CD8-positive, alpha-beta T cell (primary cell): ENCODE measurements at regions of chr1 and their contacts with region 1.

Region 1: GRCh38 chr1:168342572-168343280 is 62.0 kb downstream of the TBX19 start:
- DNase-seq: peak; percentile 79 to 95 (median 88)
- ATAC-seq: peak; percentile 99
- H3K4me3 ChIP-seq: no peak overlapping the region
- H3K4me3 Mint-ChIP-seq: peak overlapping the region; percentile 54
- H3K27ac ChIP-seq: peak overlapping the region in 1 of 2 experiments; percentile 48
- H3K27ac Mint-ChIP-seq: peak overlapping the region; percentile 92
- H3K4me1 ChIP-seq: peaks cover 19% of the 10 kb centered on the region
- H3K4me1 Mint-ChIP-seq: peaks cover 32% of the 10 kb centered on the region
- H3K27me3 ChIP-seq: no peaks in the 10 kb centered on the region
- H3K27me3 Mint-ChIP-seq: no peaks in the 10 kb centered on the region
- CTCF ChIP-seq: peak; percentile 71

Region 2: DNA sequence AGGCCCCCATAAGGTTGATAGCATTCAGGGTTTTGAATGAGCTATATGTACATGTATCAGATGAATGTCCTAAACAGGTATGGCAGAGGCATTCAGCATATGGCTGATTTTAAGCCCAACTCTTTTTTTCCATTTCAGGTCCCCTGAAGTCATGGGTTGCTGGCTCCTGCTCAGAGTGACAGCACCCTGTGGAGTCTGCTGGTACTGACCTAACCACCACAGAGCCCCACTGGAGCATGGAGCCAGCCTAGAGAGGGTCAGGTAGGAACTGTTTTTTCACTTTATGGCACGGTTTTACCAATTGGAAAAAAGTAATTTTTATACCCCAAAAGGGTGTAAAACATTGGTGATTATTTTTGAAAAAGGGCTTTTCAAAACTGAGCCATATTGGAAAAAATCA is 323.3 kb before region 1 on chr1:
- CTCF ChIA-PET with region 1: no interaction called
- POLR2A ChIA-PET with region 1: no interaction called
- intact Hi-C with region 1: no loop called
- DNase-seq: no peak
- ATAC-seq: no peak
- H3K4me3 ChIP-seq: no peak overlapping the region
- H3K4me3 Mint-ChIP-seq: no peak overlapping the region
- H3K27ac ChIP-seq: no peak overlapping the region
- H3K27ac Mint-ChIP-seq: no peak overlapping the region
- H3K4me1 ChIP-seq: no peaks in the 10 kb centered on the region
- H3K4me1 Mint-ChIP-seq: no peaks in the 10 kb centered on the region
- H3K27me3 ChIP-seq: no peaks in the 10 kb centered on the region
- H3K27me3 Mint-ChIP-seq: no peaks in the 10 kb centered on the region
- CTCF ChIP-seq: no peak

Region 3: DNA sequence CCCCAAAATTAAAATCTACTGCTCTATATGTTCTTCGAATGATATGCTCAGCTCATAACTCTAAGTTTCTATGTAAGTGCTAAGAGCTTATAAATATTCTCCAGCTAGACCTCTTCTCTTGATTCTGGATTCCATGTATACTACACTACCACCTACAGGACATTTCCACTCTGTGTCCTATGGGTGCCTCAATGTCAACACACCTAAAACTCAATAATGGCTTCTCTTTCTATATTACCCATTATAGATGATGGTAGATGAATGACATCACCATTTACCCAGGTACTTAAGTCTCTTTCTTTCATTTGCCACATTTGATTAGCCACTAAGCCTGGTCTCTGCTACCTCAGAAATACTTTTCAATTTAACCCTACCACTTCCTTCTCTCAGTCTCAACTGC is 20.8 kb before region 1 on chr1:
- CTCF ChIA-PET with region 1: interaction called, 10 read pairs
- POLR2A ChIA-PET with region 1: no interaction called
- intact Hi-C with region 1: no loop called
- DNase-seq: no peak
- ATAC-seq: no peak
- H3K4me3 ChIP-seq: no peak overlapping the region
- H3K4me3 Mint-ChIP-seq: no peak overlapping the region
- H3K27ac ChIP-seq: no peak overlapping the region
- H3K27ac Mint-ChIP-seq: no peak overlapping the region
- H3K4me1 ChIP-seq: no peaks in the 10 kb centered on the region
- H3K4me1 Mint-ChIP-seq: no peaks in the 10 kb centered on the region
- H3K27me3 ChIP-seq: no peaks in the 10 kb centered on the region
- H3K27me3 Mint-ChIP-seq: no peaks in the 10 kb centered on the region
- CTCF ChIP-seq: no peak

Region 4: GRCh38 chr1:168391759-168392681 is 49.3 kb after region 1 on chr1:
- CTCF ChIA-PET with region 1: interaction called, 10 read pairs
- POLR2A ChIA-PET with region 1: no interaction called
- intact Hi-C with region 1: no loop called
- DNase-seq: peak in 2 of 9 experiments; percentile 55 to 71
- ATAC-seq: peak; percentile 29
- H3K4me3 ChIP-seq: no peak overlapping the region
- H3K4me3 Mint-ChIP-seq: peak overlapping the region; percentile 12
- H3K27ac ChIP-seq: no peak overlapping the region
- H3K27ac Mint-ChIP-seq: peak overlapping the region; percentile 19
- H3K4me1 ChIP-seq: peaks cover under 1% of the 10 kb centered on the region
- H3K4me1 Mint-ChIP-seq: peaks cover 31% of the 10 kb centered on the region
- H3K27me3 ChIP-seq: no peaks in the 10 kb centered on the region
- H3K27me3 Mint-ChIP-seq: peaks cover 6% of the 10 kb centered on the region
- CTCF ChIP-seq: no peak

Region 5: DNA sequence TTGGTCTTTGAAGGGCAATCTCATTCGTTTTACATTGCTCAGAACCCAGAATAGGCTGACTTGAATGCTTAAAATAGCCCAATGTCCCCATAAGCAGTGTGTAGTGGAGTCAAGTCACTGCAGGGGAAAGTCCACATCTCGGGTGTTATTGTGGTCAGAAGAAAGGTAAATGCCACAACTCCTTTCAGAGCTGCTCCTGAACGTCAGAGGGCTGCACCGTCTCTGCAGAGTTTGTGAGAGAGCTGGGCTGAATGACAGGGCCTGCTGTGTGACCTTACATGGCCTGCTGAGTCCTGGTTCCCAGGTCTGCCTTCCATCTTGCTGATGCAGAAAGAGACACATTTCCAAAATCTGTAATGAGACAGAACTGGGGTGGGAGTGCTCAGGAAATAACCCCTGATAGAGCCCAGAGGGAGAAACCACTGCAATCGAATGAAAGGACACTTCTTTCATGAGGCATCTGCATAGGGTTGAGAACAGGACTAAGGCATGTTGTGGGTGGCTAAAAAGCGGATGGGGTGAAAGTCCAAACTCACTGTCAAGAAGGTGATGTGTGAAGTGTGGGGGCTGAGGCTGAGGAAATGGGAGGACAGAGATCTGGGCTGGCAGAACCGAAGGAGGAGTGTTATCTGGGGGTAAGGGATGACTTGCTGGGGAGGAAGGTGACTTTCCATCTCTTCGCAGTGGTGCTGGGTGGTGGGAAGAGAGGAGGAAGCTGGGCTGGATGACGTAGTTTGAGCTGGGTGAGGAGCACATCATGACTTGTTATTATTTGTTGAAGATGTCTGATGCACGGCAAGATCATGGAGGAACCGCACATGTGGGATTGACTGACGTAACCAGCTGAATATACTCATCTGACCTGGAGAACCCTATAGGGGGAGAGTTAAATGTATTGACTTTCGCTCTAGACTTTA is 167.4 kb after region 1 on chr1:
- CTCF ChIA-PET with region 1: interaction called, 5 read pairs
- POLR2A ChIA-PET with region 1: no interaction called
- intact Hi-C with region 1: loop called in 1 of 2 experiments (anchors 10 kb)
- DNase-seq: peak in 5 of 9 experiments; percentile 18 to 88 (median 63)
- ATAC-seq: peak; percentile 57
- H3K4me3 ChIP-seq: no peak overlapping the region
- H3K4me3 Mint-ChIP-seq: peak overlapping the region; percentile 4
- H3K27ac ChIP-seq: peak overlapping the region in 1 of 2 experiments; percentile 65
- H3K27ac Mint-ChIP-seq: peak overlapping the region; percentile 84
- H3K4me1 ChIP-seq: peaks cover 56% of the 10 kb centered on the region
- H3K4me1 Mint-ChIP-seq: peaks cover 72% of the 10 kb centered on the region
- H3K27me3 ChIP-seq: no peaks in the 10 kb centered on the region
- H3K27me3 Mint-ChIP-seq: no peaks in the 10 kb centered on the region
- CTCF ChIP-seq: no peak

Region 6: GRCh38 chr1:169133801-169134502 is 791.2 kb after region 1 on chr1:
- CTCF ChIA-PET with region 1: no interaction called
- POLR2A ChIA-PET with region 1: no interaction called
- intact Hi-C with region 1: loop called in 1 of 2 experiments (anchors 5 kb)
- DNase-seq: peak in 1 of 9 experiments; percentile 13
- ATAC-seq: no peak
- H3K4me3 ChIP-seq: no peak overlapping the region
- H3K4me3 Mint-ChIP-seq: no peak overlapping the region
- H3K27ac ChIP-seq: no peak overlapping the region
- H3K27ac Mint-ChIP-seq: peak overlapping the region; percentile 34
- H3K4me1 ChIP-seq: no peaks in the 10 kb centered on the region
- H3K4me1 Mint-ChIP-seq: no peaks in the 10 kb centered on the region
- H3K27me3 ChIP-seq: no peaks in the 10 kb centered on the region
- H3K27me3 Mint-ChIP-seq: no peaks in the 10 kb centered on the region
- CTCF ChIP-seq: no peak

Region 7: DNA sequence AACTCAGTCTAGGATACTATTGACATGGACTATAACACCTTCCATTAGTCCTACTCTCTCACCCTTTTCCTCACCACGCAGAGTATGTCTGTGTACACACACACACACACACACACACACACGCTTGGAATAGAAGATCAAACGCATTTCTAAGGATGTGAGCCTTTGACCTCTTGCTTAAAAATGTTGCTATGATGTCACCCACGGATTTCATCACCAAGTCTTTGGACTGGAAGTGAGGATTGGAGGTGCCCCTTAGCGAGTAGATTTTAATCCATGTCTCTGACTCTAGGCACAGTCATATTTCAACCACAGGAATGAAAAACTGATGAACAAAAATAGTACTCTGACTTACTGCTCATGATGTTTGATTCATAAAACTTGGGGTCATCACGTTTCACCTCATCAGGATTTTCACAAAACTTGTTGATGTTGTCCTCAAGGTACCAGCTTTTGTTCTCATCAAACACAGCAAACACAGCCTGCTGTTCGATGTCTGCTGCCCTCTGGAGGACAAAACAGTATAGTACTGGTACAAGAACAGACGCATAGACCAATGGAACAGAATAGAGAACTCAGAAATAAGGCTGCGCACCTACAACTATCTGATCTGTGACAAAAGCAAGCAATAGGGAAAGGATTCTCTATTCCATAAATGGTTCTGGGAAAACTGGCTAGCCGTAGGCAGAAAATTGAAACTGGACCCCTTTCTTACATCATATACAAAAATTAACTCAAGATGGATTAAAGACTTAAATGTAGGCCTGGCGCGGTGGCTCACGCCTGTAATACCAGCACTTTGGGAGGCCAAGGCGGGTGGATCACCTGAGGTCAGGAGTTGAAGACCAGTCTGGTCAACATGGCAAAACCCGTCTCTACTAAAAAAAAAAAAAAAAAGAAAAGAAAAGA is 1203.6 kb after region 1 on chr1:
- CTCF ChIA-PET with region 1: interaction called, 7 read pairs
- POLR2A ChIA-PET with region 1: no interaction called
- intact Hi-C with region 1: loop called (anchors 1 kb)
- DNase-seq: peak in 8 of 9 experiments; percentile 26 to 85 (median 52)
- ATAC-seq: peak; percentile 85
- H3K4me3 ChIP-seq: no peak overlapping the region
- H3K4me3 Mint-ChIP-seq: no peak overlapping the region
- H3K27ac ChIP-seq: no peak overlapping the region
- H3K27ac Mint-ChIP-seq: no peak overlapping the region
- H3K4me1 ChIP-seq: no peaks in the 10 kb centered on the region
- H3K4me1 Mint-ChIP-seq: no peaks in the 10 kb centered on the region
- H3K27me3 ChIP-seq: no peaks in the 10 kb centered on the region
- H3K27me3 Mint-ChIP-seq: no peaks in the 10 kb centered on the region
- CTCF ChIP-seq: peak; percentile 82